ENCODE measurements at regions of chr13 and their contacts with region 1.

Region 1: DNA sequence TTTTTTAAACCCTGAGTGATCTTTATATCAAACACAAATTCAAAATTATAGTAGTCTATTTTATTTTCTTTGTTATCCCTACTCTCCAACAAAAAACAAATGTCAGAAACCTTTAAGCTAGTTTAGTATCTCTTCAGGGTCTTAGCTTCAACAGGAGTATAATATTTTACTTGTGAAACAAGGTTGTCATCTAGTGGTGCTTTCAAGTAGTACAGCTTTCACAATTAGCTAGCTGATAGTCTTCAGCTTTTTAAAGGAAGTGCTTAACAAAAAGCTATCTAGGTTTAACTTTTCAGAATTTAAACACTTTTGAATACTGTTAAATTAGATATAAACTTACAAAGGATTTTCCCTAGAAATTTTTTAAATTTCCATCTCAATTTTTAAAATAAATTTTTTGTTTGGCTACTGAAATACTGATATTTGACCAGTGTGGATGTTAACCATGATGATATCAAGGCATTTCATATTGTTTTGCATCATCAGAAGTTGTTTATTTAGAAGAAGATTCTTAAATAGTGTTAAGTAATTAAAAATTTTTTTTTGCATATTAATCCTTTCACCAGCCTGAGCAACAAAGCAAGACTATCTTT is 34.2 kb downstream of the TDRD3 start:
- DNase-seq: peak; percentile 80
- H3K4me3 ChIP-seq: no peak overlapping the region
- H3K27ac ChIP-seq: no peak overlapping the region
- H3K4me1 ChIP-seq: peaks cover 6% of the 10 kb centered on the region
- H3K27me3 ChIP-seq: no peaks in the 10 kb centered on the region
- CTCF ChIP-seq: peak; percentile 44 to 63
- POLR2A ChIP-seq: no peak

Region 2: GRCh38 chr13:59906413-59907049 is 524.7 kb before region 1 on chr13:
- CTCF ChIA-PET with region 1: interaction called, 16 read pairs
- POLR2A ChIA-PET with region 1: no interaction called
- dilution Hi-C with region 1: no loop called
- intact Hi-C with region 1: loop called (anchors 1 kb)
- DNase-seq: peak; percentile 47
- H3K4me3 ChIP-seq: no peak overlapping the region
- H3K27ac ChIP-seq: no peak overlapping the region
- H3K4me1 ChIP-seq: peaks cover 2% of the 10 kb centered on the region
- H3K27me3 ChIP-seq: no peaks in the 10 kb centered on the region
- CTCF ChIP-seq: peak; percentile 24 to 37
- POLR2A ChIP-seq: no peak

Region 3: GRCh38 chr13:60163478-60164233 is 267.5 kb before region 1 on chr13 and contains the start of gene DIAPH3:
- CTCF ChIA-PET with region 1: interaction called, 4 read pairs
- POLR2A ChIA-PET with region 1: no interaction called
- dilution Hi-C with region 1: no loop called
- intact Hi-C with region 1: loop called (anchors 10 kb)
- DNase-seq: peak; percentile 96
- H3K4me3 ChIP-seq: peak within 1 kb of the TSS; percentile 91 to 97 (median 96)
- H3K27ac ChIP-seq: peak within 1 kb of the TSS; percentile 90
- H3K4me1 ChIP-seq: peaks cover 18% of the 10 kb centered on the region
- H3K27me3 ChIP-seq: no peaks in the 10 kb centered on the region
- CTCF ChIP-seq: no peak
- POLR2A ChIP-seq: peak; percentile 87
- total RNA-seq, gene DIAPH3: 40.9 and 44.0 TPM in 2 replicates

Region 4: GRCh38 chr13:60273927-60274527 is 157.2 kb before region 1 on chr13:
- CTCF ChIA-PET with region 1: no interaction called
- POLR2A ChIA-PET with region 1: no interaction called
- dilution Hi-C with region 1: no loop called
- intact Hi-C with region 1: no loop called
- DNase-seq: no peak
- H3K4me3 ChIP-seq: no peak overlapping the region
- H3K27ac ChIP-seq: no peak overlapping the region
- H3K4me1 ChIP-seq: no peaks in the 10 kb centered on the region
- H3K27me3 ChIP-seq: peaks cover 3 to 8% of the 10 kb centered on the region in 2 experiments
- CTCF ChIP-seq: no peak
- POLR2A ChIP-seq: no peak

Region 5: DNA sequence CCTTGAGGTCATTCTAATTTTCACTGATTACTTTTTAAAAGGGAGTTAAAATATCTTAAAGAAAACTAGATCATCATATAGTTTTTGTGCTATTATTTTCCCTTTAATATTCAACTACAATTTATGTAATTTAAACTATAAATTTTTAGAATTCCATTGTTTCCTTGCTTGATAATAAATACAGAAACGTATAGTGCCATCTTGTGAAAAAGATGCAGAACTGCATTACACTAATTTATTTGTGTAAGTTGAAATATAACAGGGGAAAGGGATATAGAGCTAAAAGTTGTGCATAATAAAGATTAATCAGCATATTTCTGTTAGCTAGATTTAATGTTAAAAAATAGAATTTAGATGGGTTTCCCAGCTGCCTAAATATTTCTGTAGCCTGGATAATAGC is 95.7 kb before region 1 on chr13:
- CTCF ChIA-PET with region 1: interaction called, 12 read pairs
- POLR2A ChIA-PET with region 1: no interaction called
- dilution Hi-C with region 1: no loop called
- intact Hi-C with region 1: loop called (anchors 2 kb)
- DNase-seq: peak; percentile 37
- H3K4me3 ChIP-seq: no peak overlapping the region
- H3K27ac ChIP-seq: no peak overlapping the region
- H3K4me1 ChIP-seq: peaks cover 7% of the 10 kb centered on the region
- H3K27me3 ChIP-seq: peaks cover 9 to 17% of the 10 kb centered on the region in 2 experiments
- CTCF ChIP-seq: peak in 1 of 2 donors; percentile 27
- POLR2A ChIP-seq: no peak

Region 6: GRCh38 chr13:60441761-60442160 is 10.6 kb after region 1 on chr13:
- CTCF ChIA-PET with region 1: interaction called, 18 read pairs
- POLR2A ChIA-PET with region 1: no interaction called
- dilution Hi-C with region 1: no loop called
- intact Hi-C with region 1: no loop called
- DNase-seq: no peak
- H3K4me3 ChIP-seq: no peak overlapping the region
- H3K27ac ChIP-seq: no peak overlapping the region
- H3K4me1 ChIP-seq: no peaks in the 10 kb centered on the region
- H3K27me3 ChIP-seq: no peaks in the 10 kb centered on the region
- CTCF ChIP-seq: no peak
- POLR2A ChIP-seq: no peak

Region 7: DNA sequence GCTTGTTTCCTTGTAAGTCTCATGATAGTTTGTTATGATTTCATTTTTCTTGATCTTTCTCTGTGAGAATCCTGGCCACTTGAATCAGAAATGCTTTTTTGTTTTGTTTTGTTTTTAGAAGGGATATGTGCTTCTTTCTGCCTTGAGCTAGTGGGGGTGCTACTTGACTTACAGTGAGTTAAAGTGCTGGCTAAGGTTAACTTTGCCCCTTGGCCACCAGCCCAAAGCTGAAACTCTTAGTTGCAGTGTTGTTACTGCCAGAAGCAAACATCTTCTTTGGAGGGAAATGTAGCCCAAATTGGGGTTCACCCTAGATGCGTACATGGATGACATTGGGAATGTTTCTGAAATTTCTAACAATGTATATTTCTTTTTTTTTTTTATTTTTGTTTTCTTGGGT is 23.2 kb after region 1 on chr13:
- CTCF ChIA-PET with region 1: no interaction called
- POLR2A ChIA-PET with region 1: no interaction called
- dilution Hi-C with region 1: no loop called
- intact Hi-C with region 1: no loop called
- DNase-seq: no peak
- H3K4me3 ChIP-seq: no peak overlapping the region
- H3K27ac ChIP-seq: no peak overlapping the region
- H3K4me1 ChIP-seq: no peaks in the 10 kb centered on the region
- H3K27me3 ChIP-seq: no peaks in the 10 kb centered on the region
- CTCF ChIP-seq: no peak
- POLR2A ChIP-seq: no peak

Region 8: DNA sequence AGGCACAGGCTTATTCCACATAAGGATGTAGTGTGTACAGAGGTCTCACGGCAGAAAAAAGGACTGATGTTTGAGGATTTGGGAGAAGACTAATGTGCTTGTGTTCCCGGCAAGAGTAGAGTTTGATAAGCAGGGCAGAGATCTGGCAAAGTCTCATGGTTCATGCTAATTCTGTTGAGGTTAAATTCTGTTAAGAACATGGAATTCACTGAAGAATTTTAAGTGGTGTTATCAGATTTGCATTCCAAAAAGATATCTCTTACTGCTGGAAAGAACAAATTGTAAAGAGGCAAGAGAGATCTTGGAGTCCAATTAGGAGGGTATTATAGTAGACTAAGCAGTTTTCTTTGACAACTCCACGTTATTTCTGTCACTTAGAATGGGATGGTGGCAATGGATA is 314.1 kb after region 1 on chr13:
- CTCF ChIA-PET with region 1: no interaction called
- POLR2A ChIA-PET with region 1: no interaction called
- dilution Hi-C with region 1: no loop called
- intact Hi-C with region 1: no loop called
- DNase-seq: no peak
- H3K4me3 ChIP-seq: no peak overlapping the region
- H3K27ac ChIP-seq: no peak overlapping the region
- H3K4me1 ChIP-seq: no peaks in the 10 kb centered on the region
- H3K27me3 ChIP-seq: no peaks in the 10 kb centered on the region
- CTCF ChIP-seq: no peak
- POLR2A ChIP-seq: no peak

Measured in endothelial cell of umbilical vein (primary cell).